ENCODE measurements at regions of chr5 and their contacts with region 1.

Region 1: GRCh38 chr5:132410451-132411381 is 41.2 kb downstream of the SLC22A5 start:
- DNase-seq: peak; percentile 89
- ATAC-seq: peak; percentile 71
- H3K4me3 Mint-ChIP-seq: peak overlapping the region; percentile 93
- H3K27ac Mint-ChIP-seq: peak overlapping the region; percentile 100
- H3K4me1 Mint-ChIP-seq: peaks cover 63% of the 10 kb centered on the region
- H3K27me3 Mint-ChIP-seq: no peaks in the 10 kb centered on the region
- CTCF ChIP-seq: peak; percentile 53

Region 2: DNA sequence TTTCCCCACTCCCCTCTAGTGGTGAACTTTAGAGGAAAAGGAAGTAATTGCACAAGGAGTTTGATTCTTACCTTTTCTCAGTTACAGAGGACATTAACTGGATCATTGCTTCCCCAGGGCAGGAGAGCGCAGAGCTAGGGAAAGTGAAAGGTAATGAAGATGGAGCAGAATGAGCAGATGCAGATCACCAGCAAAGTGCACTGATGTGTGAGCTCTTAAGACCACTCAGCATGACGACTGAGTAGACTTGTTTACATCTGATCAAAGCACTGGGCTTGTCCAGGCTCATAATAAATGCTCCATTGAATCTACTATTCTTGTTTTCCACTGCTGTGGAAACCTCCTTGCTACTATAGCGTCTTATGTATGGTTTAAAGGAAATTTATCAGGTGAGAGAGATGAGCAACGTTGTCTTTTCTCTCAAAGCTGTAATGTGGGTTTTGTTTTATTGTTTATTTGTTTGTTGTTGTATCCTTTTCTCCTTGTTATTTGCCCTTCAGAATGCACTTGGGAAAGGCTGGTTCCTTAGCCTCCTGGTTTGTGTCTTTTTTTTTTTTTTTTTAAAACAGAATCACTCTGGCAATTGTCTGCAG is 16.0 kb before region 1 on chr5:
- CTCF ChIA-PET with region 1: interaction called, 4 read pairs
- POLR2A ChIA-PET with region 1: interaction called, 12 read pairs
- intact Hi-C with region 1: no loop called
- DNase-seq: no peak
- ATAC-seq: no peak
- H3K4me3 Mint-ChIP-seq: no peak overlapping the region
- H3K27ac Mint-ChIP-seq: no peak overlapping the region
- H3K4me1 Mint-ChIP-seq: peaks cover 55% of the 10 kb centered on the region
- H3K27me3 Mint-ChIP-seq: no peaks in the 10 kb centered on the region
- CTCF ChIP-seq: no peak

Region 3: DNA sequence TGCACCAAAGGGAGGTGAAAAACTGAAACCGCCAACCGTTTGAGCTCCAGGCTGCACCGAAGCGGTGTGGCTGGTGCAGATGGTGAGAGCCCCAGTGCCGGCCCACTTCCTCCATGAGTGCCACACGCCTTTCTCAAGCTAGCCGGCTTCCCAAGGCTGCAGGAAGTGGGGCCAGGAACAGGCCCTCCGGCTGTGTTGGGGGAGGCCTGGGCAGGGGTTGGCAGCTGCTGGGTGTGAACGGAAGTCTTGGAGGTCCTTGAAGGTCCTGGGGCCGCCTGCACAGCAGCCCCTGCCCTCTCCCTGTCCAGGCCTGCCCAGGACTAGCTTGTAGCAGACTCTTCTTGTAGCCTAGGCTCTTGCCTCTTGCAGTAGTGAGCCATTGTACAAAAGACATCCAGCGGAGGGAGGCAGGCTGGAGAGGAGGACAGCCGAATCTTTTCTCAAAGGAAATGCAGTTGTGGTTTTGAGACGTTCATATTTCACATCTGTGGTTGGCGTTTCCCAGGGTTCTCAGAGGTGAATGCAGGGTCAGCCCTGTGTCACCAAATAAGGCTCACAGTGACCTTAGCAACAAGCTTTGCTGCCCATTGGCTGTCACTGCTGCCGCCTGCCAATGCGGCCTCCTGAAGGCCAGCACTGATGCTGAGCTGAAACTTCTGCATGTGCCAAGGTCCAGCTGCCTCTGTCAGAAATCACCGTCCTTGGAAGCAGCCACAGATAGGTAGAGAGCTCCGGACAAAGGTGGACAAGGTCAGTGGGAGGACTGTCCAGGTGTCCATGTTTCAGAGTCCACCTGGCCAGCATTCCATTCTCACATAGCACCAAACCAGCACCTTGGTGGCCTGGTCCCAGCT is 55.9 kb after region 1 on chr5:
- CTCF ChIA-PET with region 1: interaction called, 9 read pairs
- POLR2A ChIA-PET with region 1: interaction called, 54 read pairs
- intact Hi-C with region 1: no loop called
- DNase-seq: peak; percentile 89
- ATAC-seq: peak; percentile 69
- H3K4me3 Mint-ChIP-seq: peak overlapping the region; percentile 66
- H3K27ac Mint-ChIP-seq: peak overlapping the region; percentile 88
- H3K4me1 Mint-ChIP-seq: peaks cover 87% of the 10 kb centered on the region
- H3K27me3 Mint-ChIP-seq: no peaks in the 10 kb centered on the region
- CTCF ChIP-seq: no peak

Region 4: DNA sequence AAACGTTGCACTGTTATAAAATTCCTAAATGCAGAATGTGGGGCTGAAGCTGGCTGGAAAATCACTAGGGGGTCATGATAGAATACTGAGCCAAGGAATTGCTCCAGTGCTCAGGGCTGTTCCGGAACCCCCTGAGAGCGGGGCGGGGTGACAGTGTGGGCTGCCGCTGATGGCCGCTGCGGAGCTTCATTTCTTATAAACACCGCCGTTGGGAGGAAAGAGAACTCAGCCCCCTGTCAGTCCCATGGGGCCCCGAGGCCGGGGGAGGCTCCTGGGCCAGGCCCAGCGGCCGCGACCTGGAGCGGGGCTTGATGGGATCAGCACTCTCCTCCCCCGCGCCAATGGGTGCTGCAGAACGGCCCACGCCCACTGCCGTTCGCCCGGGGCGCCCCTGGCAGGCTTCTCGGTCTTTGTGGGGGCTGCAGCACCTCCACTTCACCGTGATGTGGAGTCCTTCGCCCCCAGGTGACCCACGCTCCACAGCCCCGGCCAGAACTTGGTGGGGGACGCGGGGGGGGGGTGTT is 85.0 kb after region 1 on chr5:
- CTCF ChIA-PET with region 1: interaction called, 25 read pairs
- POLR2A ChIA-PET with region 1: interaction called, 393 read pairs
- intact Hi-C with region 1: no loop called
- DNase-seq: peak; percentile 94
- ATAC-seq: peak; percentile 60
- H3K4me3 Mint-ChIP-seq: peak overlapping the region; percentile 90
- H3K27ac Mint-ChIP-seq: peak overlapping the region; percentile 99
- H3K4me1 Mint-ChIP-seq: peaks cover 67% of the 10 kb centered on the region
- H3K27me3 Mint-ChIP-seq: no peaks in the 10 kb centered on the region
- CTCF ChIP-seq: no peak

Region 5: GRCh38 chr5:132576123-132576522 is 165.4 kb after region 1 on chr5:
- CTCF ChIA-PET with region 1: no interaction called
- POLR2A ChIA-PET with region 1: no interaction called
- intact Hi-C with region 1: no loop called
- DNase-seq: no peak
- ATAC-seq: no peak
- H3K4me3 Mint-ChIP-seq: no peak overlapping the region
- H3K27ac Mint-ChIP-seq: no peak overlapping the region
- H3K4me1 Mint-ChIP-seq: peaks cover 18% of the 10 kb centered on the region
- H3K27me3 Mint-ChIP-seq: no peaks in the 10 kb centered on the region
- CTCF ChIP-seq: no peak